Sciatic nerve (tissue), 2 donors: ENCODE measurements at regions of chr7 and their contacts with region 1.

Region 1: DNA sequence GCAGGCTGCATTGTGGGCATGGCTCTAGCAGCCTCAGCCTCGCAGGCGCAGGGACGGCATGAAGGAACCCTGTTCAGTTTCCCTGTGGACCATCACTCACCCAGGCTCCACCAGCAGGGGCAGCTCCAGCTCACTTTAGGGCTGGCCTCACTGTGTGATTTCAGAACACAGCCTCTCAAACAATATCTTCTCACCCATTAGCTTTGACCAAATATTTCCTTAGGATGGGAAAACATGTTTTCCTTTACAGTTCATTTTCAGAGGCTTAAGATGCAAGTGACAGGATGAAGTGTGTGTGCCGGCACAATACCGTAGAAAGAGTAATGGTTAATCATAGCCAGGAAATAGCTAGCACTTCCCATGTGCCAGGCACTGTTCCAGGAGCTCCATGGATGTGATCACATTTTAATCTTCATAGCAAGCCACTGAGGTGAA is 58.2 kb downstream of the LANCL2 start:
- DNase-seq: no peak
- ATAC-seq: no peak

Region 2: GRCh38 chr7:54960517-54960916 is 462.8 kb before region 1 on chr7:
- intact Hi-C with region 1: no loop called
- DNase-seq: no peak
- ATAC-seq: no peak

Region 3: GRCh38 chr7:55255496-55256435 is 167.5 kb before region 1 on chr7:
- intact Hi-C with region 1: no loop called
- DNase-seq: peak; percentile 89
- ATAC-seq: peak; percentile 89

Region 4: DNA sequence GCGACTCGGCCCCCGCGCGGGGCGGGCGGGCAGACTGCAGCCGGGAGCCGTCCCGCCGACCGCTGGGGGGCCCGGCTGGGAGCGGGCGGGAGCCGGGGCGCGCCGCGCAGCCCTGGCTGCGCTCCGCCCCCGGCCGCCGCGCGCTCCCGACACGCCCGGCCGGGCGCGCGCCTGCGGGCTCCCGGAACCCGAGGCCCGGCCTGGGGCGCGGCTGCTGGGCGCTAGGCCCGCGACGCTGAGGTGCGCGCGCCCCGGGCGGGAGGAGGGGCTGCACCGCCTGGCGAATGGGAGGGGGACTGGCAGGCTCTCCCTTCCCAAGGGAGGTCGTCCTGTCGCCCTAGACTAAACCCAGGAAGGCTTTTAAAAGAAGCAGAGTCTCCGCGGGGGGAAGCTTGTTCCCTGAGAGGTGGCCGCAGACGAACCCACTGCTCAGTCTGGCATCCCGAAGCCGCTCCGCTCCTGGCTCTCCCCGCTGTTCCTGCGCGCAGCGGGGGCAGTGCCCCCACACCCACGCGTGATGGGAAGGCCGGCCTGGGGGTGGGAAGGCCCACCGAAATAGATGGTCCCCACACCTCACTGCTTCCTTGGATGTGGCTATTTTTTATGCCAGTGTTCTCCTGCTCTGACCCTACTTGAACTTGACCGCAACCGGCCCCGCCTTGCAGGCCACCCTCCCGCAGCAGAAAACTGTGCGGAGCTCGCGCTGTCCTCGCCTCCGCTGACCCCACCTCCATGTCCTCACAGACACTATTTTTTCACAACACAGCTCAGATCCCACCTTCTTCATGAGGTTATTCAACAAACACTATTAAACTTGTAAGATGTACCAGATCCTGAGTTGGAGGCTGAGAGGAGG is 149.3 kb after region 1 on chr7 and contains the start of gene VOPP1:
- intact Hi-C with region 1: loop called (anchors 10 kb)
- DNase-seq: peak; percentile 80
- ATAC-seq: peak; percentile 89
- total RNA-seq, gene VOPP1: 66.2 TPM